Prostate gland (tissue), 2 donors: ENCODE measurements at regions of chr20 and their contacts with region 1.

Region 1: DNA sequence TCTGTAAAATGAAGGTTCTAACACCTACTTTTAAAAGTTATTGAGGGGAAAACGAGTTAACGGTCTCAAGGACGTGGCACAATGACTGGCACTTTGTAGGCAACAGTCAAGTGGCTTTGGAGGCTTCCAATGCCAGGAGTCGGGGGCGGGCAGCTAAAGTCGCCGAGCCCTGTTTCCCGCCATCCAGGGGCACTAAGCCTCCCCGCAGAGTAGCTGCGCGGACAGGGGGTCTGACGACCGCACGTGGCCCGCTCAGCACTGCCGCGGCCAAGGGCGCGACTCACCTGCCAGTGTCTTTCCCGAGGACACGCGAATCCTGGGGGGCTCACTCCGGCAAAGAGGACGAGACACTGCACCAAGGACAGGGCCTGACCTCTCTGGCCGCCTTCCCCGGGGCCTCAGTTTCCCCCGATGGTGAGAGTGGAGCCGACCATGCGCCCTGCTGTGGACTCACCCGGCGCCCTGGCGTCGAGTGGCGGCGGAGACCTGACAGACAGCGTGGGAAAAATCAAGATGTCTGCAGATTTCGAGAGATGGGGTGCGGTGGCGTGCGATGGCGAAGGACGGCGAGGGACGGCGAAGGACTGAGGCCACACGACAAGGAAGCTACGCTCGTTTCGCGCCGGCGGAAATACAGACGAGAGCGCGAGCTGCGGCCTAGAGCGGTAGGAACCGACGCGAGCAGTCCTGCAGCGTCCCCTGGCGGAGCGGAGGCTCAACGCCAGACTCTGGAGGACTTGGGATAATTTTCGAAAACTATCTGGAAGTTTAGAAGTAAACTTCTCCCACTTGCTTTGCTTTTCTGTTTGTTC is at the start of gene SNHG17:
- DNase-seq: peak; percentile 84
- H3K4me3 ChIP-seq: peak within 1 kb of the TSS; percentile 31 to 68
- H3K27ac ChIP-seq: peak within 1 kb of the TSS; percentile 17 to 60
- H3K4me1 ChIP-seq: no peaks in the 10 kb centered on the region
- H3K27me3 ChIP-seq: no peaks in the 10 kb centered on the region
- CTCF ChIP-seq: peak; percentile 99
- POLR2A ChIP-seq: peak; percentile 53
- total RNA-seq, gene SNHG17: 21.8 to 28.2 TPM

Region 2: GRCh38 chr20:38446441-38447209 is 11.7 kb after region 1 on chr20:
- intact Hi-C with region 1: loop called (anchors 1 kb)
- DNase-seq: peak; percentile 80
- H3K4me3 ChIP-seq: peak overlapping the region; percentile 77 to 86
- H3K27ac ChIP-seq: peak overlapping the region; percentile 83 to 85
- H3K4me1 ChIP-seq: no peaks in the 10 kb centered on the region
- H3K27me3 ChIP-seq: no peaks in the 10 kb centered on the region
- CTCF ChIP-seq: peak; percentile 62 to 97 (median 96)
- POLR2A ChIP-seq: peak; percentile 52